ENCODE measurements at regions of chr17 and their contacts with region 1.

Region 1: GRCh38 chr17:43483674-43484372 is at the start of gene DHX8:
- DNase-seq: peak; percentile 94
- CTCF ChIP-seq: peak; percentile 100

Region 2: DNA sequence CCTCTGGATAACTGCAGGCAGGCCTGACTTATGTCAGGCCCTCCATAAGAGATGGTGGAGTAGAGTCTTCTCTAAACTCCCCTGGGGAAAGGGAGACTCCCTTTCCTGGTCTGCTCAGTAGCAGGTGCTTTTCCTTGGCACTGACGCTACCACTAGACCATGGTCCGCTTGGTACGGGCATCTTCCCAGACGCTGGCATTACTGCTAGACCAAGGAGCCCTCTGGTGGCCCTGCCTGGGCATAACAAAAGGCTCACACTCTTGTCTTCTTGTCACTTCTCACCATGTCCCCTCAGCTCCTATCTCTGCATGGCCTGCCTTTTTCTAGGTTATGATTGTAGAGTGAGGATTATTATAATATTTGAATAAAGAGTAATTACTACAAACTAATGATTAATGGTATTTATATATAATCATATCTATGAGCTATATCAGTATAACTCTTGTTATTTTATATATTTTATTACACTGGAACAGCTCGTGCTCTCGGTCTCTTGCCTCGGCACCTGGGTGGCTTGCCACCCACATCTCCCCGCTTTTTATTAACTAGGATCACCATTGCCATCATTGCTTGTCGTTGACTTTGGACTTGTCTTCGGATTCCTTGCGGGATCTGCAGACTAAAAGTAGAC is 144.8 kb before region 1 on chr17:
- CTCF ChIA-PET with region 1: interaction called, 17 read pairs
- POLR2A ChIA-PET with region 1: no interaction called
- DNase-seq: no peak
- CTCF ChIP-seq: peak; percentile 59

Region 3: GRCh38 chr17:43367737-43368242 is 116.0 kb before region 1 on chr17:
- CTCF ChIA-PET with region 1: interaction called, 30 read pairs
- POLR2A ChIA-PET with region 1: interaction called, 30 read pairs
- DNase-seq: peak; percentile 60
- CTCF ChIP-seq: no peak

Region 4: DNA sequence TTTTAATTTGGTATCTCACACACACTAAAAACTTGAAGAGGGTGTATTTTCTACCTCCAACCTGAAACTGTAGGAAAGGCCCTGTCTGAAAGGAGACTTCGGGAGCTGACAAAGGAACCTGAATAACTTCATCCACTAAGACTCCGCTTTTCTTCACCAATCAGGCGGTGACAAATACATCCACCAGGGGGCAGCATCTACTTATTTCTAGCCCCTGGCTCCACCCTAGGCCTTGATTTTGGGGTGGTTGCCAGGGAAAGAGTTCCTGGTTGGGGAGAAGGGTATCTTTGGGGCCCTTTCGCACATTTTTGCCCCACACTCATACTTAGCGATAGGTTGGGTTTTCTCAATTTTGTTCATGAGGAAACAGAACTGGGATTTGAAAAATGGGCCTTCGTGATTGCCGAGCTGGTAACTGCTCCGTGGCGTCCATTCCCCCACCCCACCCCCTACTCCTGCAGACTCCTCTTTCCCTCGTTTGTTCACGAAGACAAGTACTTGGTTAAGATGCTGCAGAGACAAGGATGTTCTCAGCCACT is 89.8 kb before region 1 on chr17:
- CTCF ChIA-PET with region 1: interaction called, 266 read pairs
- POLR2A ChIA-PET with region 1: interaction called, 8 read pairs
- DNase-seq: peak; percentile 86
- CTCF ChIP-seq: peak; percentile 83

Region 5: DNA sequence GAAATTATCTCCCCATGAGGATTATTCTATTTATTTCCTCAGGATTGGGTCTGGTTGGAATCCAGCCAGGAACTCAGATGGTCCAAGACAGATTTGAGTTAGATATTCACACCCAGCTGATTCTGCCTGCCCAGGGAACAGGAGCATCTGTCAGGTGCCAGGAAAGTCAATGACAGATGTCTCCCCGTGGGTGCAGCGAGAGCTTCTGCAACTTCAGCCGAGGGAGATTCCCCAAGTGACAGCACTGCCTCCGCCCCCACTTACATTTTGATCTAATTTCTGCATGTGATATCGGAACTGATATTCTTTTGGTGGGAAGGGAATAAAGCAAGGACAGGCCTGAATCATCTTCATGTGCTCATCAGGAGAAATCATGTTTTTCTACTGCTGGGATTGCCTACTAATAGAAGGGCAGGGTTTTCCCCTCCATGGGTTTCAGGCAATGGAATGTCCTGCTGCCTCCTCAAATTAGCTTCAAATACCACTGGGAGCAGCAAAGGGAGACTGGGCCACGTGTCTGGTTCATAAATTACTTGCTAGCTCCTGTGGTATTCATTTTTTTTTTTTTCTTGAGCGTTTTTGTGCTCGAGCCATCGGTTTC is 15.7 kb before region 1 on chr17:
- CTCF ChIA-PET with region 1: interaction called, 32 read pairs
- POLR2A ChIA-PET with region 1: no interaction called
- DNase-seq: no peak
- CTCF ChIP-seq: no peak

Region 6: GRCh38 chr17:43584666-43585102 is 100.9 kb after region 1 on chr17:
- CTCF ChIA-PET with region 1: no interaction called
- POLR2A ChIA-PET with region 1: no interaction called
- DNase-seq: no peak
- CTCF ChIP-seq: no peak

Measured in GM10248 (cell line).